ENCODE measurements at regions of chrX and their contacts with region 1.

Region 1: GRCh38 chrX:119647552-119648420 is 41.6 kb upstream of the NKRF start:
- DNase-seq: peak; percentile 98
- ATAC-seq: peak; percentile 95
- H3K4me3 ChIP-seq: 0 out of 2 replicates have a peak overlapping the region, but pooled peaks have one; percentile 11
- H3K27ac ChIP-seq: peak overlapping the region; percentile 89
- H3K4me1 ChIP-seq: peaks cover 47% of the 10 kb centered on the region
- H3K27me3 ChIP-seq: no peaks in the 10 kb centered on the region
- CTCF ChIP-seq: no peak
- EP300 ChIP-seq: peak; percentile 94 to 97
- POLR2A ChIP-seq: peak; percentile 53
- RAD21 ChIP-seq: no peak

Region 2: DNA sequence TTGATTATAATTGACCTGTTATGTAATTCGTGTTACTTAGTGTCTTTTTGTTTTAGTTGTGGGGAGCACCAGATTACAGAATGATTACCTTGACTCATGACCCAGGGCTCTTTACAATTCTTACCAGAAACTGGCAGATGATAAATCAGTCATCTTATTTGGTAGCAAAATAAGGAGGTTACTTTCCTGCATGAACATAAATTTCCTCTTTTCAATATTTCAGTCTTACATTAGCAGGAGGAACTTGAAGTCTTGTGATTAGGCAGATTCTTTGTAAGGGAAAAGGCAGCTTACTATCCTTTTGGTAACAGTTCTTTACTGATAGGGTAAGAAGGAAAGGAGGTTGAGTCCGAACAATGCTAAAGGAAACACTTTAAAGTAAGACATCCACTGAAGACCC is 205.5 kb before region 1 on chrX:
- CTCF ChIA-PET with region 1: no interaction called
- POLR2A ChIA-PET with region 1: no interaction called
- RAD21 ChIA-PET with region 1: no interaction called
- SMC1A ChIA-PET with region 1: no interaction called
- in situ Hi-C with region 1: no loop called
- intact Hi-C with region 1: no loop called
- DNase-seq: no peak
- ATAC-seq: no peak
- H3K4me3 ChIP-seq: no peak overlapping the region
- H3K27ac ChIP-seq: no peak overlapping the region
- H3K4me1 ChIP-seq: no peaks in the 10 kb centered on the region
- H3K27me3 ChIP-seq: no peaks in the 10 kb centered on the region
- CTCF ChIP-seq: no peak
- EP300 ChIP-seq: no peak
- POLR2A ChIP-seq: no peak
- RAD21 ChIP-seq: no peak

Region 3: GRCh38 chrX:119669424-119670037 is 21.7 kb after region 1 on chrX:
- CTCF ChIA-PET with region 1: interaction called, 6 read pairs
- POLR2A ChIA-PET with region 1: interaction called, 6 read pairs
- RAD21 ChIA-PET with region 1: interaction called, 11 read pairs
- SMC1A ChIA-PET with region 1: interaction called, 19 read pairs
- in situ Hi-C with region 1: no loop called
- intact Hi-C with region 1: no loop called
- DNase-seq: no peak
- ATAC-seq: no peak
- H3K4me3 ChIP-seq: no peak overlapping the region
- H3K27ac ChIP-seq: no peak overlapping the region
- H3K4me1 ChIP-seq: peaks cover 25% of the 10 kb centered on the region
- H3K27me3 ChIP-seq: no peaks in the 10 kb centered on the region
- CTCF ChIP-seq: no peak
- EP300 ChIP-seq: no peak
- POLR2A ChIP-seq: no peak
- RAD21 ChIP-seq: no peak